Aorta (tissue), 5 donors: ENCODE measurements at regions of chrX and their contacts with region 1.

Region 1: GRCh38 chrX:9530848-9531274 is 66.0 kb downstream of the TBL1X start:
- DNase-seq: peak; percentile 77 to 80
- ATAC-seq: peak; percentile 65
- H3K4me3 ChIP-seq: no peak overlapping the region
- H3K27ac ChIP-seq: no peak overlapping the region
- H3K4me1 ChIP-seq: peaks cover 0 to 1% of the 10 kb centered on the region in 2 donors
- H3K27me3 ChIP-seq: no peaks in the 10 kb centered on the region

Region 2: DNA sequence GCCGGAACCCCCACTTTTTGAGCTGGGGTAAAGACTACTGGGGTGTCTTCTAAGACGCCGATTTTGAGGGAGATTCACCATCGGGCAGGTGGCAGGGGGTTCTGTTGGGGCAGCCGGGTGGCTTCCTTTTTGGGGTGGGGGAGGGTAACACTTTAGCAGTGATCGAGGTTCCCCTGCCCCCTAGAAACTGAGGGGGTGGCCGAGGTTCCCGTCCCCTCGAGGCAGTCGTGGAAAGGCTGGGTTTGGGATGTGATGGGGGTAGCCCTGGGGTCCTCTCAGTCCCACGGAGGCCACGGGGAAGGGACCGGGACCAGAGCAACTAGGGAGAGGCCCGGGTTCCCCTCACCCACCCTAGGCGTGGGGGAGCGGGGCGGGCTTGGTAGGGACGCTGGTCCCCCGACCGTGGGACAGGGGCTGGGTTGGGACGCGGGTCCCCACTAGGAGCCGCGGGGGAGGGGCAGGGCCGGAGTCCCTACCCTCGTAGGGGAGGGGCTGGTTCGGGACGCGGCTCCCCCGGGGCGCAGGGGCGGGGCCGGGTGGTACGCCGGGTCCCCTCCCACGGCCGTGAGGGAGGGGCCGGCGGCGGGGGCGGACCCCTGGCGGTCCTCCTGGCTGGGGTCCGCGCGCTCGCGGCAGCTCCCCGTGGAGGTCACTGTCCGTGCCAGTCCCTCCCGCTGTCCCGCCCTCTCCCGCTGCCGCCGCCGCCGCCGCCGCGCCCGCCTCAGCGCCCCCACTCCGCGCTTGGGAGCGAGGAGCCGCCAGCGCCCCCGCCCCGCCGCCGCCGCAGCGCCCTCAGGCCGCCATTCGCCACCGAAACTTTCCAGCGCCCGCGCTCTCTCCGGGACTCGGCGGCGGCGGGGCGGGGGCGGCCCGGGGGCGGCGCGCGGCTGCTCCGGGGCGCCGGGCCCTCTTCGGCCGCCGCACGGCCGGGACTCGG is 66.2 kb before region 1 on chrX and contains the start of gene TBL1X:
- intact Hi-C with region 1: loop called in 1 of 2 experiments (anchors 5 kb)
- DNase-seq: peak; percentile 69 to 87
- ATAC-seq: peak; percentile 71
- H3K4me3 ChIP-seq: peak within 1 kb of the TSS; percentile 95 to 99
- H3K27ac ChIP-seq: peak within 1 kb of the TSS; percentile 72 to 82
- H3K4me1 ChIP-seq: no peaks in the 10 kb centered on the region
- H3K27me3 ChIP-seq: no peaks in the 10 kb centered on the region
- total RNA-seq, gene TBL1X: 42.1 to 81.2 TPM

Region 3: DNA sequence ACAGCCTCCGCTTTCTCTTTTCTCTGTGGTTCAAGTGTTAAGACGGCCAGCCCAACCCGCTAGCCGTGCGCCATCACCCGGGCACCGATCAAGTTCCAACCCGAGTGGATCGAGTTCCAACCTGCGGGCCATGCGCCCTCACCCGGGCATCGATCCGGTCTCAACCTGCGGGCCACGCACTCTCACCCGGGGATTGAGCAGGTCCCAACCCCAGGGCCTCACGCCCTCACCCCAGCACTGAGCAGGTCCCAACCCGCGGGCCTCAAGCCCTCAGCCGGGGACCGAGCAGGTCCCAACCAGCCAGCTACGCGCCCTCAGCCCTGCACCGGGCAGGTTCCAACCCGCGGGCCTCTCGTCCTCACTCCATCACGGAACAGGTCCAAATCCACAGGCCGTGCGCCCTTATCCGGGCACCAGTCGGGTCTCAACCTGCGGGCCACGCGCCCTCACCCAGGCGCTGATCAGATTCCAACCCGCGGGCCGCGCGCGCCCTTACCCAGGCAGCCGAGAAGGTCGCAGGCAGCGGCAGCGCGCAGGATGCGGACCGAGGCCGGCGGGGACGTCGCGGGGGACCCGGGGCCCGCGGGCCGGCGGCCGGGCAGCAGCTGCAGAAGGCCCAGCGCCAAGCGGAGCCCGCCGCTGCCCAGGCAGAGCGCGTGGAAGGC is 234.3 kb after region 1 on chrX:
- intact Hi-C with region 1: no loop called
- DNase-seq: no peak
- ATAC-seq: peak; percentile 19
- H3K4me3 ChIP-seq: no peak overlapping the region
- H3K27ac ChIP-seq: no peak overlapping the region
- H3K4me1 ChIP-seq: no peaks in the 10 kb centered on the region
- H3K27me3 ChIP-seq: peaks cover 0 to 2% of the 10 kb centered on the region in 2 donors